Right ventricle myocardium inferior (tissue), 1 donor: ENCODE measurements at regions of chr2 and their contacts with region 1.

Region 1: DNA sequence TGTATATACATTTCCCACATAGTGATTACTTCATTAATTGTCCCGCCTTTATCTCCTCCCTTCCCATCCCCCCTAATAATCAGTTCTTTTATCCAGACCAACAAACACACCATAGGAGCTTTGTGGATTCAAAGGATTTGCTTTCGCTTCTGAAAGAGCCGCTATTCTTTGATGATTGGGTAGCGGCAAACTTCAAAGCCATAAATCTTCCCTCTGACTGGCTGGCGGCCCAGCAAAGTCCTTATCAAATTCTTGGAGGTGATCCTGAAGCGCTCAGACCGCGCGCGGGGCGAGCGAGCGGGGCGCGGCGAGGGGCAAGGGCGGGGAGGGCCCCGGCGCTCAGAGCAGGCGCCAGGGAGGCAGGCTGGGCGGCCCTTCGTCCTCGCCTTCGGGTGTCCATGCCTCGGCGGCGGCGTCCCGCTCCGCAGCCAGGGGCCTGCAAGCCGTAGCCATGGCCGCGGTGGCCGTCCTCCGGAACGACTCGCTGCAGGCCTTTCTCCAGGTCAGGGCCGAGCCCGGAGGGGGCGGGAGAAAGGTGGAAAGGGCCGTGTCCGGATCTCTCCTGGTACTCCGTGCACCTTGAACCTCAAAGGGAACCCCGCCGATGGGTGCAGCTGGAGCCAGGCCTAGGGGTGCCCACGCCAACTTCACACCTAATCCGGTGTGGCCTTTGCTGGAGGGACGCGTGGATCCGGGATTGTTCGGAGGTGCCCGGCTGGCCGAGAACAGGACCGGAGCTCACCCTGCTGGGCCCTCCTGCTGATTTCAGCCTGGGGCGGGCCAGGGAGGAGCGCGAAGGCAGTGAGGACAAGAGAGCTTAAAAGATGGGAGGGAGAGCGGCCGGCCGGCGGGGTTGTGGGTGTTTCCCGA is at the start of gene SP5:
- DNase-seq: peak; percentile 75
- ATAC-seq: peak; percentile 29
- total RNA-seq, gene SP5: 0.19 TPM

Region 2: GRCh38 chr2:170505631-170506275 is 209.5 kb before region 1 on chr2:
- intact Hi-C with region 1: loop called (anchors 10 kb)
- DNase-seq: peak; percentile 78
- ATAC-seq: peak; percentile 76

Region 3: DNA sequence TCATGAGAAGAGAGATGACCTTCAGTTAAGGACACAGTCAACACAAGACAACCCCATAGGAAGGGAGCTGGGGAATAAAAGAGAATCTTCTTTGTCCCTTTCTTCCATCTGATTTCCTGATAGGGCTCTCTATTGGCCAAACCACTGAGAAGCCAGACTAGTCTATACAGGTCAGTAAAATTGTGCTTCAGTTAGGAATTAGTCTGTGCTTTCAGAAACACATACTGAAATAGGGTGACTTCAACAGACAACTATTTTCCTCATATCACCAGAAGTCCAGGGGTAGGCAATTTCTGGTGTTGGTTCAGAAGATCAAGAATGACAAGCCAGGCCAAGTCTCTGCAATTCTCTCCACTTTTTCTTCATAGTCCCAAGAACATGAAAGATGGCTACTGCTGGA is 151.9 kb before region 1 on chr2:
- intact Hi-C with region 1: no loop called
- DNase-seq: no peak
- ATAC-seq: no peak

Region 4: GRCh38 chr2:170922634-170923494 is 207.6 kb after region 1 on chr2:
- intact Hi-C with region 1: no loop called
- DNase-seq: no peak
- ATAC-seq: no peak

Region 5: DNA sequence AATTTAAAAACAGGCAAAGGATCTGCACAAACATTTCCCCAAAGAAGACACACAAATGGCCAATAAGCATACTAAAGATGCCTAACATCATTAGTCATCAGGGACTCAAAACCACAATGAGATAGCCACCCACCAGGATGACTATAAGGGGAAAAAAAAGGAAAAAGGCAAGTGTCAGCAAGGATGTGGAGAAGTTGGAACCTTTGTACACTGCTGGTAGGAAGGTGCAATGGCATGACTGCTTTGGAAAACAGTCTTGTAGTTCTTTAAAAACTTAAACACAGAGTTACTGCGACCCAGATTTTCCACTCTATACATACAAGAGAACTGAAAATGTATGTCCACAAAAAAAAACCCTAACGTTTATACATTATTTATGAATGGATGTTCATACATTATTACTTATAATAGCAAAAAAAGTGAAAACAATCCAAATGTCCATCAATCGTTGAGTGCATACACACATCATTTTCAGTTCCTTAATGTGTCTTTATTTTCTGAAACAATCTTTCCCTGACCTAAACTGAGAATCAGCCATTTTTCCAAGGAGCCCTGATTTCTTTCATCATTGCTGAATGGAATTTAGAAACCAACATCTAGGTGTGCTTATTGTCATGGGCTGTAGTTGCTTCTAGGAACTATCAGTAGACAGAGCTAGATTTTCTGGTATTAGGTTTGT is 510.1 kb after region 1 on chr2:
- intact Hi-C with region 1: no loop called
- DNase-seq: no peak
- ATAC-seq: no peak